CD4-positive, alpha-beta memory T cell (primary cell): ENCODE measurements at regions of chr1 and their contacts with region 1.

Region 1: GRCh38 chr1:51235673-51236530 is at the start of gene RNF11:
- DNase-seq: peak; percentile 90 to 94 (median 94)
- H3K4me3 ChIP-seq: peak within 1 kb of the TSS; percentile 91 to 93
- H3K4me3 Mint-ChIP-seq: peak within 1 kb of the TSS; percentile 94 to 99 (median 98)
- H3K27ac ChIP-seq: peak within 1 kb of the TSS; percentile 81
- H3K27ac Mint-ChIP-seq: peak within 1 kb of the TSS; percentile 87 to 100 (median 99)
- H3K4me1 ChIP-seq: peaks cover 52% of the 10 kb centered on the region
- H3K4me1 Mint-ChIP-seq: peaks cover 15 to 40% (median 32%) of the 10 kb centered on the region in 4 donors
- H3K27me3 ChIP-seq: no peaks in the 10 kb centered on the region
- H3K27me3 Mint-ChIP-seq: no peaks in the 10 kb centered on the region
- total RNA-seq, gene RNF11: 40.8 to 43.4 TPM

Region 2: GRCh38 chr1:51175278-51175677 is 60.6 kb before region 1 on chr1:
- CTCF ChIA-PET with region 1: no interaction called
- POLR2A ChIA-PET with region 1: no interaction called
- intact Hi-C with region 1: no loop called
- DNase-seq: no peak
- H3K4me3 ChIP-seq: no peak overlapping the region
- H3K4me3 Mint-ChIP-seq: peak overlapping the region in 1 of 8 donors; percentile 52
- H3K27ac ChIP-seq: no peak overlapping the region
- H3K27ac Mint-ChIP-seq: no peak overlapping the region
- H3K4me1 ChIP-seq: no peaks in the 10 kb centered on the region
- H3K4me1 Mint-ChIP-seq: peaks cover 0 to 7% (median 5%) of the 10 kb centered on the region in 4 donors
- H3K27me3 ChIP-seq: no peaks in the 10 kb centered on the region
- H3K27me3 Mint-ChIP-seq: peaks cover 19 to 26% of the 10 kb centered on the region in 2 donors

Region 3: GRCh38 chr1:51203874-51204245 is 32.0 kb before region 1 on chr1:
- CTCF ChIA-PET with region 1: no interaction called
- POLR2A ChIA-PET with region 1: no interaction called
- intact Hi-C with region 1: no loop called
- DNase-seq: no peak
- H3K4me3 ChIP-seq: no peak overlapping the region
- H3K4me3 Mint-ChIP-seq: no peak overlapping the region
- H3K27ac ChIP-seq: no peak overlapping the region
- H3K27ac Mint-ChIP-seq: no peak overlapping the region
- H3K4me1 ChIP-seq: no peaks in the 10 kb centered on the region
- H3K4me1 Mint-ChIP-seq: no peaks in the 10 kb centered on the region
- H3K27me3 ChIP-seq: no peaks in the 10 kb centered on the region
- H3K27me3 Mint-ChIP-seq: no peaks in the 10 kb centered on the region

Region 4: GRCh38 chr1:51214615-51215131 is 21.2 kb before region 1 on chr1:
- CTCF ChIA-PET with region 1: interaction called, 4 read pairs
- POLR2A ChIA-PET with region 1: interaction called, 15 read pairs
- intact Hi-C with region 1: no loop called
- DNase-seq: peak in 2 of 5 donors; percentile 5 to 8
- H3K4me3 ChIP-seq: no peak overlapping the region
- H3K4me3 Mint-ChIP-seq: peak overlapping the region in 6 of 8 donors; percentile 19 to 40 (median 21)
- H3K27ac ChIP-seq: no peak overlapping the region
- H3K27ac Mint-ChIP-seq: peak overlapping the region; percentile 3 to 67 (median 30)
- H3K4me1 ChIP-seq: peaks cover 11% of the 10 kb centered on the region
- H3K4me1 Mint-ChIP-seq: peaks cover 15 to 23% (median 17%) of the 10 kb centered on the region in 4 donors
- H3K27me3 ChIP-seq: no peaks in the 10 kb centered on the region
- H3K27me3 Mint-ChIP-seq: no peaks in the 10 kb centered on the region

Region 5: GRCh38 chr1:51303751-51304251 is 67.9 kb after region 1 on chr1:
- CTCF ChIA-PET with region 1: no interaction called
- POLR2A ChIA-PET with region 1: no interaction called
- intact Hi-C with region 1: no loop called
- DNase-seq: no peak
- H3K4me3 ChIP-seq: no peak overlapping the region
- H3K4me3 Mint-ChIP-seq: no peak overlapping the region
- H3K27ac ChIP-seq: no peak overlapping the region
- H3K27ac Mint-ChIP-seq: peak overlapping the region in 3 of 7 donors; percentile 19 to 53 (median 52)
- H3K4me1 ChIP-seq: no peaks in the 10 kb centered on the region
- H3K4me1 Mint-ChIP-seq: peaks cover 0 to 2% (median under 1%) of the 10 kb centered on the region in 4 donors
- H3K27me3 ChIP-seq: no peaks in the 10 kb centered on the region
- H3K27me3 Mint-ChIP-seq: no peaks in the 10 kb centered on the region

Region 6: GRCh38 chr1:51616901-51617708 is 381.2 kb after region 1 on chr1 and contains the start of gene OSBPL9:
- CTCF ChIA-PET with region 1: no interaction called
- POLR2A ChIA-PET with region 1: interaction called, 5 read pairs
- intact Hi-C with region 1: loop called (anchors 5 kb)
- DNase-seq: peak; percentile 84 to 91 (median 87)
- H3K4me3 ChIP-seq: peak within 1 kb of the TSS; percentile 76 to 79
- H3K4me3 Mint-ChIP-seq: peak within 1 kb of the TSS; percentile 100
- H3K27ac ChIP-seq: peak within 1 kb of the TSS; percentile 72
- H3K27ac Mint-ChIP-seq: peak within 1 kb of the TSS; percentile 93 to 100 (median 99)
- H3K4me1 ChIP-seq: peaks cover 32% of the 10 kb centered on the region
- H3K4me1 Mint-ChIP-seq: peaks cover 24 to 49% (median 37%) of the 10 kb centered on the region in 4 donors
- H3K27me3 ChIP-seq: no peaks in the 10 kb centered on the region
- H3K27me3 Mint-ChIP-seq: peaks cover under 1 to 1% of the 10 kb centered on the region in 2 donors
- total RNA-seq, gene OSBPL9: 45.1 to 46.9 TPM